Activated T-helper 1 cell treated with anti-CD3 and anti-CD28 coated beads, Interleukin-12 subunit alpha, Interleukin-12 subunit beta, Interleukin-2, Interleukin-4 antibody, amounts not matched to agents 30 ng/mL and 10 ng/mL and 1 ng/mL, durations not matched to agents 14 hours and 24 hours and 36 hours (primary cell): ENCODE measurements at regions of chr12 and their contacts with region 1.

Region 1: GRCh38 chr12:10001171-10001776 is 2.4 kb upstream of the CLEC1B start:
- DNase-seq: no peak
- H3K4me3 Mint-ChIP-seq: no peak overlapping the region
- H3K27ac Mint-ChIP-seq: no peak overlapping the region
- H3K4me1 Mint-ChIP-seq: no peaks in the 10 kb centered on the region
- H3K27me3 Mint-ChIP-seq: peaks cover 33% of the 10 kb centered on the region

Region 2: DNA sequence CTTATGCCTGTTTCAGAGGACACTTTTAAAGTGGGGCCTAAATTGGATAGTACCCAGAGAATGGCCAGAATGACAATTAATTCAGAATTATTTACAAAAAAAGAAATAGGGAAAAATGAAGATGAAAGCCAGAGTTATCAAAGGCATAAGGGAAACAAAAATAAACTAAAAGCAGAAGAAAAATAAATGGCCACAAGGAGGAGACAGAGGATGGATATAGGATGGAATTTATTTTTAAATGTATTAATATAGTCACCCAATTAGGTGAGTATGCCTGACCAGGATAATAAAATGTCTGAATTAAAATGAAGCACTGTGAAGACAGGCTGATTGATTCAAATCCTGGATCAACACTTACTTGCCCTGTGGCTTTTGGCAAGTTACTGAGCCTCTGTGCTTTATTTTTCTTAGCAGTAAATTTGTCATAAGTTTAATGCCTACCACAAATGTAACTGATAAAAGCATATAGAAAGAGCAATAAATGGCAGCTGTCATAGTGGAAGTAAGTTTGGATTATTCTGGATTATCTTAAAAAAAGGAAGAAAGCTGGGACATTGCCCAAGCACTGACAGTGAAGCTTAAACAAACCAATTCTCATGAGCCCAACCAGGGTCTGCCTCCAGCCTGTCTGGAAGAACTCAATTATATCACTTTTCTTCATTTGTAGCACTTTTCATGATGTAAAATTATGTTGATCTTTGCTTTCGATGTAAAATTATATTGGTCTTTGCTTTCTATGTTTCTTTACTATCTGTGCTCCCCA is 32.7 kb after region 1 on chr12:
- intact Hi-C with region 1: loop called (anchors 2 kb)
- DNase-seq: no peak
- H3K4me3 Mint-ChIP-seq: no peak overlapping the region
- H3K27ac Mint-ChIP-seq: no peak overlapping the region
- H3K4me1 Mint-ChIP-seq: no peaks in the 10 kb centered on the region
- H3K27me3 Mint-ChIP-seq: peaks cover 8% of the 10 kb centered on the region